Calu3 (cell line): ENCODE measurements at regions of chr17 and their contacts with region 1.

Region 1: GRCh38 chr17:41548844-41549595 is 20.9 kb upstream of the KRT19 start:
- DNase-seq: peak; percentile 99
- H3K4me3 Mint-ChIP-seq: peak overlapping the region; percentile 62
- H3K27ac Mint-ChIP-seq: peak overlapping the region; percentile 92
- H3K4me1 Mint-ChIP-seq: peaks cover 91% of the 10 kb centered on the region
- H3K27me3 Mint-ChIP-seq: no peaks in the 10 kb centered on the region
- CTCF ChIP-seq: peak; percentile 98

Region 2: DNA sequence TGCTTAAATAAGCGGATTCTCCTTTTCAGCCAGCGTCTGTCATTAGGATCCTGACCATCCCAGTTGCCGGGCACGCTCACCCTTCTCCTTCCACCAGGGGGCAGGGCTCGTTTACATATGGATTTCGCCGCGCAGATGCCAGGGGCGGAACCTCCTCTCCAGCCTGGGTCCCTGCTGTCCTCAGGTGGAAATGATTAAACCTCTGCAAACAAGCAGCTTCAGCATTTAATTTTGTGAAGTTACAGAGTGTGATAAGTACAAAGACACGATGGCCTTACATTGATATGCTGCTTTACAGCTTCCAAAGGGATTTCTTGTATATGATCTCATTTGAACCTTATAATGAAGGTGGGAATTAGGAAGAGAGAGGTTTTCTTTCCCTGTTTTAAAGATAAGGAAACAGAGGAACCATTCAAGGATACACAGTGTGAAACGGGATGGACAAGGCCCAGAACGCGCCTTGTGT is 745.4 kb before region 1 on chr17:
- CTCF ChIA-PET with region 1: interaction called, 20 read pairs
- intact Hi-C with region 1: loop called (anchors 1 kb)
- DNase-seq: peak; percentile 100
- H3K4me3 Mint-ChIP-seq: no peak overlapping the region
- H3K27ac Mint-ChIP-seq: no peak overlapping the region
- H3K4me1 Mint-ChIP-seq: no peaks in the 10 kb centered on the region
- H3K27me3 Mint-ChIP-seq: peaks cover 38% of the 10 kb centered on the region
- CTCF ChIP-seq: peak; percentile 100

Region 3: DNA sequence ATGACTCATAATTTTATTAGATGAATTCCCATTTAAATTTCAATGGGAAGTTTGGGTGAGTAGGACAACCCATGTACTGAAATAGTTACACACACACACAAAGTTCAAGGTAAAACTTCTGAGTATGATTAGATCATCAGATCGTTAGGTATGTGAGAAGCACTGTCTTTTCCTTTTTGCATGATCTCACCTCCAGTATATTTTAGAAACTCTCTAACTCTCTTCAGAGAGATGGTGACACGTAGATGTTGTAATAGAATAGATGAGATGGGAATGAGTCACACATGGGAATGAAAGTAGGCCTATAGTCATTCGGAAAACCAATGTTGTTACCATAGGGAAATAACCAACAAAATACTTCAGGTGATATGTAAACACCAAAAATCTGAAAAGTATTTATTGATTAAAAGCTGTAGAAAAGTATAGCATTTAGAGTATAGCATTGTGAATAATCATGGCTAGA is 633.8 kb before region 1 on chr17:
- CTCF ChIA-PET with region 1: interaction called, 23 read pairs
- intact Hi-C with region 1: loop called (anchors 2 kb)
- DNase-seq: no peak
- H3K4me3 Mint-ChIP-seq: peak overlapping the region; percentile 31
- H3K27ac Mint-ChIP-seq: peak overlapping the region; percentile 96
- H3K4me1 Mint-ChIP-seq: peaks cover 84% of the 10 kb centered on the region
- H3K27me3 Mint-ChIP-seq: no peaks in the 10 kb centered on the region
- CTCF ChIP-seq: no peak

Region 4: GRCh38 chr17:41417576-41418015 is 131.4 kb before region 1 on chr17:
- CTCF ChIA-PET with region 1: interaction called, 27 read pairs
- intact Hi-C with region 1: no loop called
- DNase-seq: peak; percentile 72
- H3K4me3 Mint-ChIP-seq: peak overlapping the region; percentile 29
- H3K27ac Mint-ChIP-seq: peak overlapping the region; percentile 84
- H3K4me1 Mint-ChIP-seq: peaks cover 72% of the 10 kb centered on the region
- H3K27me3 Mint-ChIP-seq: no peaks in the 10 kb centered on the region
- CTCF ChIP-seq: peak; percentile 91

Region 5: DNA sequence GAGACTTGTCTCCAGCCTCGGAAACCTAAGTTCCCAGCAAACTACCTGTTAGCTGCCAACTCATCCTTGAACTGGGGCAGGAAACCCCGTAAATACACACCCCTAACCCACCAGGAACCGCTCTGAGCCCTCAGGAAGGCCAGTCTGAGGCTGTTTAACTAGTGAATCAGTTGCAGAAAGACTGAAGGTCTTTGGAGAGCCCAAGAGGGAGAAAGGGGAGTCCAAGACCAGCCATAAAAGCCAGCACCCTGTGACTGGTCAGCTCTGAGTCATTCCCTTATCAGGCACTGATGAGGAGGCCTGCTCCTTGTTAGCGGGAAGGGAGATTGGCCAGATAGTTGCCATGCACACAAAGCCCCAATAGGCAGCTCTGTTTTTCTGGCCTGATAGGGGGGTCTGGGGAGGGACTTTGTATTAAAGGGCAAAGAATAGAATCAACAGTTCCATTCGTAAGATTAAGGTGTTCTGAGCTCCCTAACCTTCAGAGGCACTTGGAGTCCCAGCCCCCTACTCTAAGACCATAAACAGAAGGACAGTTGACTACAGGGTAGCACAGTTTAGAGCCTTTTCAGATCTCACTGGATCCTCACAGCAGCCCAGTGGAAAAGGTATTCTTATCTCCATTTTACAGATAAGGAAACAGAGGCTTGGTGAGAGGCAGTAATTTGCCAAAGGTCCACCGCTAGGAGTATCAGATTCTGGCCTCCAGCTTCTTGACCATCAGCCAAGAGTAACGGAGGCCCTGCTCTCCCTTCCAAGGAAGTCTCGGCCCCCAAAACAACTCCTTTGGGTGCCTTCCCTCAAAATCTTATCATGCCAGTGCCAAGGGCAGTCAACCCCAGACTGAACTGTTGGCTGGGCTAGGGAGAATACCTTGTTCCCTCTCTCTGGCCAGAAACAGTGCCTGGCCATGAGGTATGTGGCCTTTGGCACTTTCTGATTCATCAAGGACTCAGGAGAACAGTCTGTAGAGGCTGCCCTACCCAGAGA is 18.7 kb before region 1 on chr17:
- CTCF ChIA-PET with region 1: interaction called, 471 read pairs
- intact Hi-C with region 1: loop called (anchors 1 kb)
- DNase-seq: peak; percentile 93
- H3K4me3 Mint-ChIP-seq: peak overlapping the region; percentile 95
- H3K27ac Mint-ChIP-seq: peak overlapping the region; percentile 99
- H3K4me1 Mint-ChIP-seq: peaks cover 62% of the 10 kb centered on the region
- H3K27me3 Mint-ChIP-seq: no peaks in the 10 kb centered on the region
- CTCF ChIP-seq: no peak

Region 6: DNA sequence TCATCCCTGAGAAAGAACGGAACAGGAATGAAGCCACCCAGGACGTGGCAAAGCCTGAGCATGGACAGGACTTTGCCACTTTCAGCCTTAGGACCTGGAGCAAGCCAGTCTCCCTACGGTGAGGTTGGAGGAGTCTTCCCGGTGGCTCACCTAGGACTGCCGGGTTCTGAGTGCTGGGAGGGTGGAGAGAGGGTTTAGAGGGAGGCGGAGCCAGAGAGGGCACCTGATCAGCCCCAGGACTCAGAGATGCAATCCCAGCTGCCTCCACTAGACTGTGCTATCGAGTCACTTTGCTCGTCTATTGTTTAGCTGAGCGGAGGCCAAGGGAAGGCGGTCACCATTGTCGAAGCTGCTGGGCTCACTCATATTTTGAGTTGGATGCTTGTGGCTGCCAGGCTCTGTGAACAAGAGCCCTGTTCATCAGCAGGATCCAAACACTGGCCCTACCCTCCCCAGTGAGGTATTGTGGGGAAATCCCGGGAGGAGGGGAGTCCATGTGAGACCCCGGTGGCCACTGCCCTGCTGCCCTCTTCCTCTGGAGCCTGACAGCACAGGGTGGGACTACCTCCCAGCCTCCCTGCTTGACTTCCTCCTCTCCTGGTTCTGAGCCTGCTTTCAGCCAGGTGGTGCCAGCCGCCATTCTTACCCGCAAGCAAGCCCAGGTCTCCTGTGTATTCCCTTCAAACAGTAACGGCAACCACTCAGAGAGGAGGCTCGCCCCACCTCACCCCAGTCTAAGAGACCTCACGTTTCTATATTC is 30.6 kb after region 1 on chr17:
- CTCF ChIA-PET with region 1: interaction called, 50 read pairs
- intact Hi-C with region 1: loop called (anchors 2 kb)
- DNase-seq: peak; percentile 96
- H3K4me3 Mint-ChIP-seq: no peak overlapping the region
- H3K27ac Mint-ChIP-seq: no peak overlapping the region
- H3K4me1 Mint-ChIP-seq: peaks cover 47% of the 10 kb centered on the region
- H3K27me3 Mint-ChIP-seq: no peaks in the 10 kb centered on the region
- CTCF ChIP-seq: peak; percentile 93

Region 7: DNA sequence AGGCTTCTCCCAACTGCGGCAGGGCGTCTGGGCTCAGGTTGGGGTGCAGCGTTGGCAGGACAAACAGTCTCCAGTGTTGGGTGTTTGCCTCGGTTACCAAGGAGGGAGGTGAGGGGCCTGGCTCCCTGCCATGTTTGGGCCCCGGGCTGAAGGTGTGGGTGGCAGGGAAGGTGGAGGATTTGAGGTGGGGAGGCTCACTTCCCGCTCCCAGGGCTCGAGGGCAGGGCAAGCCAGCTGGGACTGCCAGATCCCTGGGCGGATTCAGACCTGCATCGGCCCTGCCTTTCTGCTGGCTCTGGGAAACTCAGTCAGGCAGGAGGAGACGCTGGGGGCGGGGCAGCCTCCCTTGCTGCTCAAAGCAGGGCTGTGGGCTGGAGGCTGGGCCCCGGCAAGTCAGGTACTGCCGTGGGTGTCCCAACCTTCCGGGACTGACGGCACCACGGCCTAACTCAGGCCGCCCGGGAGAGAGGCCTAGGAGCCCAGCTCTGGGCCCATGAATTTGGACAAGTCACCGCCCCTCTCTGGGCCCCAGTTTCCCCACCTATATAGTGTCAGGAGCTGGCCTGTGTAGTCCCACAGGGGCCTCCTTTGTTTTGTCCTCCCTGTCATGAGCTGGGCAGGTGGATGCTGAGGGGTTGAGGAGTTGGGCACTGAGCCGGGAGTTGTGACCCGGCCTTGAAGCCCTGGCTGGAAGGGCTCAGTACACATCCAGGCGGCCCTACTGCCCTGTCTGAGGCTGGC is 106.8 kb after region 1 on chr17:
- CTCF ChIA-PET with region 1: interaction called, 230 read pairs
- intact Hi-C with region 1: no loop called
- DNase-seq: peak; percentile 89
- H3K4me3 Mint-ChIP-seq: no peak overlapping the region
- H3K27ac Mint-ChIP-seq: peak overlapping the region; percentile 82
- H3K4me1 Mint-ChIP-seq: peaks cover 48% of the 10 kb centered on the region
- H3K27me3 Mint-ChIP-seq: no peaks in the 10 kb centered on the region
- CTCF ChIP-seq: no peak